ENCODE measurements at regions of chr12 and their contacts with region 1.

Region 1: DNA sequence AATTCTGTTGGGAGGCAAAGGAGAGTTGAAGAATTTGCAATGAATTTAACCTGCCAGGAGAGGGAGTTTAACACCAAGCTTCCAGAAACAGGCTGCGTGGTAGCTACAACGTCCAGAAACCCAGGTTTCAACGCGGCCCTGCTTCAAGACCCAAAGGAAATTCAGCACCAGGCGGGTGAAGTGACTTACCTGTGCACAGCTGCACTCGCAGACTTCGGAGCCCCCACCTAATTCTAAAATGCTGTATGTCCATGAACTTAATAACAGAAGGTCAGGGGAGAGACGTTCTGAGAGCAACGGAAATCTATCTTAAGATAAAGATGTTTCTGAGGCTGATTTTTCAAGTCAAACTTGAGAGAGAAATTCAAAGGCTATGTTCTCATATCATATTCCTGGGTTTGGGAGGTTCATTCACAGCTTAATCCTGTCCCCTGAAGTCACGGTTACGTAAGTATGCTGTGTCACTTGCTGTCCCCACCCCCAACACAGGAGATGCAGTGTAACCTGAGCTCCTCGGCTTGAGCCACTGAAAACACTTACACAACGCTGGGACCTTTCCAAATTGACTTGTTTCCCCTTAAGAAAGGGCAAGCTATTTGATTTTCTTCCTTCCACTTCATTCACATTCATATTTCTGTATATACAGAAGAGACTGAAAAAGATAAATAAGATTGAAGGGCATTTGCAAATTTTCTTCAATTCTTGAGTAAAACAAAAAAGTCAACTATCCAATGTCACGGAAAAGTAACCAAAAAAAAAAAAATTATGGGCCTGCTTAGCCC is 22.7 kb downstream of the CLIP1 start:
- DNase-seq: peak; percentile 94 to 97
- ATAC-seq: peak; percentile 80 to 83
- H3K4me3 ChIP-seq: peak overlapping the region; percentile 46 to 59 (median 50)
- H3K27ac ChIP-seq: peak overlapping the region; percentile 88 to 96 (median 93)
- H3K4me1 ChIP-seq: peaks cover 35 to 75% of the 10 kb centered on the region in 2 donors
- H3K27me3 ChIP-seq: no peaks in the 10 kb centered on the region
- CTCF ChIP-seq: peak in 4 of 5 experiments; percentile 67 to 80 (median 74)
- POLR2A ChIP-seq: peak in 1 of 2 donors; percentile 59

Region 2: GRCh38 chr12:122366685-122367475 is 32.9 kb before region 1 on chr12:
- in situ Hi-C with region 1: no loop called
- intact Hi-C with region 1: loop called (anchors 2 kb)
- DNase-seq: peak; percentile 79 to 85
- ATAC-seq: peak; percentile 83 to 94
- H3K4me3 ChIP-seq: no peak overlapping the region
- H3K27ac ChIP-seq: peak overlapping the region; percentile 88 to 99 (median 96)
- H3K4me1 ChIP-seq: peaks cover 79 to 90% of the 10 kb centered on the region in 2 donors
- H3K27me3 ChIP-seq: no peaks in the 10 kb centered on the region
- CTCF ChIP-seq: no peak
- POLR2A ChIP-seq: peak in 1 of 2 donors; percentile 42

Region 3: DNA sequence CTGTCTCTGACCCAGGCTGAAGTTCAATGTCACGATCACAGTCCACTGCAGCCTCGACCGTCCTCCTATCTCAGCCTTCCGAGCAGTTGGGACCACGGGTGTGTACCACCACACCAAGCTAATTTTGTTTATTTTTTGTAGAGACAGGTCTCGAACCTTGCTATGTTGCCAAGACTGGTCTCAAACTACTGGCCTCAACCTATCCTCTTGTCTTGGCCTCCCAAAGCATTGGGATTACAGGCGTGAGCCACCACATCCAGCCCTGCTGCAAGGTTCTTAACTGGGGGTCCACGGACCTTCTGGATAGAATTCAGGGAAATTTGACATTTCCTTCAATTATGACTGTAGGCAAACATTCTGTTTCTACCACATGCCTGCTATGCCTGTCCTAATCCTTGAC is 64.0 kb after region 1 on chr12:
- in situ Hi-C with region 1: no loop called
- intact Hi-C with region 1: loop called (anchors 2 kb)
- DNase-seq: no peak
- ATAC-seq: no peak
- H3K4me3 ChIP-seq: no peak overlapping the region
- H3K27ac ChIP-seq: peak overlapping the region; percentile 25 to 66 (median 50)
- H3K4me1 ChIP-seq: peaks cover 0 to 3% of the 10 kb centered on the region in 2 donors
- H3K27me3 ChIP-seq: no peaks in the 10 kb centered on the region
- CTCF ChIP-seq: no peak
- POLR2A ChIP-seq: no peak

Region 4: DNA sequence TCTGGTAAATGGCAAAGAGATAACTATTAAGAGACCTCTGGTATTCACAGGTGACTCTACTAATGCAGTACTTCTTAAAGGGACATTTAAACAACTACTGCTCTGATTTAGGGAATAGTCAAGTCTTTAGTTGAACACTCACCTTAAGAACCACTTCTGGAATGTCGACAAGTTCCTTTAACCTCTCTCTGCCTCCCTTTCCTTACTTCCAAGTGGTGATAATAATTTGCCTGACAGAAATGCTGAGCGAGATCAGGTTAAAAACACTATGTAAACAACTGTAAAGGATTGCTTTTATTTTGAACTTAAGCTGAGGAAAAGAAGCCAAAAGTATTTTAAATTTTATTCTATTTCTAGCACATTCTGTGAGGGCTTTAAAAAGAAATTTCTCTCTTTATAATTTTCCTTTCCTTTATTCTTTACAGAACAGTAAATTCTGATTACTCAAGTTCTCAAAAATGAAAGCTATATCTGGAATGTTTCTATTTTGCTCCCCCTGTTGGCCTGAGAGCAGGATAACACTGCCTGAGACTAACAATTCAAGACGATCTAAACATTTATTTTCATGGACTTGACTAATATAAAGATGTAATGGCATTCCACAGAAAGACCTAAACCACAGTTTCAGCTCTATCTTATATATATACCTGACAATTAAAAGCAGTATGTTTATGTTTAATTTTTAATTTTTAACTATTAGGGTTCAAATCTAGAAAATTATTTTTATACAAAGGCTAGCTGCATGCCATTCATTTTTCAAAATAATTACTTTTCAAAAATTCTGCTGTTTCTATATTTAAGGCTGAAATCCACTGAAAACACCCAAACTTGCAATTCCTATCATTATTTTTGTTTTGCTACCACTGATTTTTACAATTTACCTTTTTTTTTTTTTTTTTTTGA is 71.8 kb after region 1 on chr12:
- in situ Hi-C with region 1: loop called in 2 of 4 experiments (anchors 5 kb)
- intact Hi-C with region 1: loop called (anchors 1 kb)
- DNase-seq: no peak
- ATAC-seq: peak; percentile 52 to 53
- H3K4me3 ChIP-seq: no peak overlapping the region
- H3K27ac ChIP-seq: peak overlapping the region; percentile 53 to 73 (median 64)
- H3K4me1 ChIP-seq: peaks cover 5 to 7% of the 10 kb centered on the region in 2 donors
- H3K27me3 ChIP-seq: no peaks in the 10 kb centered on the region
- CTCF ChIP-seq: peak; percentile 72 to 93 (median 76)
- POLR2A ChIP-seq: no peak